Heart right ventricle (tissue), 16 donors: ENCODE measurements at regions of chr3 and their contacts with region 1.

Region 1: GRCh38 chr3:167110901-167111300 is 269.2 kb downstream of the ZBBX start:
- DNase-seq: no peak
- ATAC-seq: peak in 2 of 8 donors; percentile 46 to 73
- H3K4me3 ChIP-seq: no peak overlapping the region
- H3K27ac ChIP-seq: no peak overlapping the region
- H3K4me1 ChIP-seq: peaks cover 0 to 5% (median 0%) of the 10 kb centered on the region in 9 donors
- H3K27me3 ChIP-seq: no peaks in the 10 kb centered on the region
- CTCF ChIP-seq: no peak

Region 2: GRCh38 chr3:166390303-166390702 is 720.6 kb before region 1 on chr3:
- intact Hi-C with region 1: loop called in 1 of 10 experiments (anchors 5 kb)
- DNase-seq: no peak
- ATAC-seq: no peak
- H3K4me3 ChIP-seq: no peak overlapping the region
- H3K27ac ChIP-seq: no peak overlapping the region
- H3K4me1 ChIP-seq: no peaks in the 10 kb centered on the region
- H3K27me3 ChIP-seq: no peaks in the 10 kb centered on the region
- CTCF ChIP-seq: no peak

Region 3: GRCh38 chr3:167057561-167057960 is 53.3 kb before region 1 on chr3:
- intact Hi-C with region 1: no loop called
- DNase-seq: no peak
- ATAC-seq: no peak
- H3K4me3 ChIP-seq: no peak overlapping the region
- H3K27ac ChIP-seq: no peak overlapping the region
- H3K4me1 ChIP-seq: no peaks in the 10 kb centered on the region
- H3K27me3 ChIP-seq: no peaks in the 10 kb centered on the region
- CTCF ChIP-seq: no peak